Body of pancreas (tissue), 4 donors: ENCODE measurements at regions of chr6 and their contacts with region 1.

Region 1: DNA sequence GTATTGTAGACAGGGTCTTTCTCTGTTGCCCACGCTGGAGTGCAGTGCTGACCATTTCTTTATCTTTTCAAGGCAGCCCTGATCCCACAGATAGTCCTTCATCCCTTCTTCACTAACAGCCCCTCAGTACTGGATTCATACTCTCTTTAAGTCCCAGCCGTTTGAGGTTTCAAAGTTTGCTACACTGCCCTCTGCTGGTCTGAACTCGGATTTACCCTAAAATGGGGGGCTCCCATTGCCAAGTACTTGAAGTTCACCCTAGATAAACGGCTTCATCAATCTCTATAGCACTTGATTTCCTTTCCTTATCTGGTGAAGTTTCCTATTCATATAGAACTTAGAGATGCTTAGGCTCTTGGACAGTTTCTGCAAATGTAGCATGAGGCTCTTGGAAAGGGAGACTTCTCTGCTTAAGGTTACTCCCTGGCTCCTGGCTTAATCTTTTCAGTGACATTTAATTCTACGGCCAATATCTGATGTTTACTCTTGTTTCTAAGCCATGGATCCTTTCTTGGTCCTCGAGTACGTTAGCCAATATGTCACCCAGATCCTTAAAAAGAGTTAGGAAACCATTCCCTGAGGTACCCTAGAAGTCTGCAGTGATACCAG is 21.4 kb upstream of the PREP start:
- DNase-seq: peak; percentile 33 to 50 (median 43)
- ATAC-seq: no peak
- H3K4me3 ChIP-seq: no peak overlapping the region
- H3K27ac ChIP-seq: no peak overlapping the region
- H3K4me1 ChIP-seq: peaks cover 4% of the 10 kb centered on the region
- H3K27me3 ChIP-seq: no peaks in the 10 kb centered on the region
- CTCF ChIP-seq: peak; percentile 31 to 63 (median 58)
- POLR2A ChIP-seq: no peak

Region 2: DNA sequence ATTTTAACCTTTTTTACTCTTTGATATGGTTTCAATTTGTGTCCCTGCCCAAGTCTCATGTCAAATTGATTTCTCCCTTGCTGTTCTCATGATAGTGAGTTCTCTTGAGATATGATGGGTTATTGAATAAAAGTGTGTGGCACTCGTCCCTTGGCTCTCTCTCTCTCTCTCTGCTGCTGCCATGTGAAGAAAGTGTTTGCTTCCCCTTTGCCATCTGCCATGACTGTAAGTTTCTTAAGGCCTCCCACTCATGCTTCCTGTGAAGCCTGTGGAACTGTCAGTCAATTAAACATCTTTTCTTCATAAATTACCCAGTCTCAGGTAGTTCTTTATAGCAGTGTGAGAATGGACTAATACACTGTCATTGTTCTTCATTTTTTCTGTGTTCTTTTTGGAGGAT is 418.8 kb before region 1 on chr6:
- intact Hi-C with region 1: no loop called
- DNase-seq: no peak
- ATAC-seq: no peak
- H3K4me3 ChIP-seq: no peak overlapping the region
- H3K27ac ChIP-seq: no peak overlapping the region
- H3K4me1 ChIP-seq: no peaks in the 10 kb centered on the region
- H3K27me3 ChIP-seq: no peaks in the 10 kb centered on the region
- CTCF ChIP-seq: no peak
- POLR2A ChIP-seq: no peak

Region 3: DNA sequence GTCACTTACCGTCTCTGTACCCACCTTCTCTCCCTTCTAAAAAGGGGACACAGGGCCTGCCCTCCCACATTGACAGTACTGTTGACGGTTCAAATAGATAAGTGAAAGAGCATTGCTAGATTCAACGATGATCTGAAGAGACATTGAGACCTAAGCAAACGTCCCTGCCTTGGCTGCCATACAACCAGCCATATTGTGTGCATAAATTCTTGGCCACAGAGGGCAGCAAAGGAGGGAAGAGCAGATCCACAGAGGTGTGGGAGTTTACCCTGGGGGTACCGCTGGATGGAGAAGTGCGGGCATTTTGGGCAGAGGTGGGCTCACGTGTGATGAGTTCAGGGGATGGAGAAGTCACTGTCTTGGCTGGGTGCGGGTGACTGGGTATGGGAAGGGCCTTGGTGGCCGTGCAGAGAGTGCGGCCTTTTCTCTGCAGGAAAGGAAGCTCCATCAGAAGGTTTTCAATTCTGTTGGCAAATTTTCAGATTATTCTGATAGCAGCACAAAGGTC is 330.1 kb before region 1 on chr6:
- intact Hi-C with region 1: loop called (anchors 5 kb)
- DNase-seq: no peak
- ATAC-seq: no peak
- H3K4me3 ChIP-seq: no peak overlapping the region
- H3K27ac ChIP-seq: no peak overlapping the region
- H3K4me1 ChIP-seq: peaks cover 7% of the 10 kb centered on the region
- H3K27me3 ChIP-seq: no peaks in the 10 kb centered on the region
- CTCF ChIP-seq: no peak
- POLR2A ChIP-seq: no peak

Region 4: GRCh38 chr6:105992315-105992961 is 568.2 kb after region 1 on chr6:
- intact Hi-C with region 1: no loop called
- DNase-seq: peak; percentile 84 to 89 (median 87)
- ATAC-seq: peak; percentile 95
- H3K4me3 ChIP-seq: peak overlapping the region; percentile 46 to 57
- H3K27ac ChIP-seq: peak overlapping the region in 3 of 4 donors; percentile 32 to 53 (median 52)
- H3K4me1 ChIP-seq: peaks cover 29% of the 10 kb centered on the region
- H3K27me3 ChIP-seq: peaks cover 6 to 32% of the 10 kb centered on the region in 2 donors
- CTCF ChIP-seq: peak in 2 of 7 experiments; percentile 8 to 18
- POLR2A ChIP-seq: peak in 2 of 3 donors; percentile 34 to 42